ENCODE measurements at regions of chr1 and their contacts with region 1.

Region 1: GRCh38 chr1:77245830-77246229 is 26.6 kb upstream of the PIGK start:
- DNase-seq: no peak
- ATAC-seq: no peak
- H3K4me3 ChIP-seq: no peak overlapping the region
- H3K27ac ChIP-seq: no peak overlapping the region
- H3K4me1 ChIP-seq: no peaks in the 10 kb centered on the region
- H3K27me3 ChIP-seq: no peaks in the 10 kb centered on the region
- CTCF ChIP-seq: no peak

Region 2: DNA sequence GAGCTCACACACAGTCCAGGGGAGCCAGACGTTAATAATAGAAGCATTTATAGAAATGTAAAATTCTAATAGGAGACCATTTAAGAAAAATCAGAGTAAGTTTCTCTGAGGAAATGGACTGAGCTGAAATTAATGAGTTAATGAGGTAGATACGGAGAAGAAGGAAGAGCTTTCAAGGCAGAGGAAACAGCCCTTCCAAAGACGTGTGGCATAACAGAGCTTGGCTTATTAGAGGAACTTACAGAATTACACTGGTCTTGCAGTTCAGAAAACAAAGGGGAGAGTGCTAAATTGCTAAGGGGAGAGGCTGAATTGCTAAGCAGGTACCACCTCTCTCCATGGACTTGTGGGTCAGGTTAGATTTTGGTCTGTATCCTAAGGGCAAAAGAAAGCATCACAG is 18.4 kb before region 1 on chr1:
- CTCF ChIA-PET with region 1: no interaction called
- POLR2A ChIA-PET with region 1: no interaction called
- in situ Hi-C with region 1: no loop called
- intact Hi-C with region 1: loop called (anchors 1 kb)
- DNase-seq: no peak
- ATAC-seq: no peak
- H3K4me3 ChIP-seq: no peak overlapping the region
- H3K27ac ChIP-seq: no peak overlapping the region
- H3K4me1 ChIP-seq: no peaks in the 10 kb centered on the region
- H3K27me3 ChIP-seq: no peaks in the 10 kb centered on the region
- CTCF ChIP-seq: no peak

Region 3: GRCh38 chr1:77970192-77970591 is 724.4 kb after region 1 on chr1:
- CTCF ChIA-PET with region 1: no interaction called
- POLR2A ChIA-PET with region 1: no interaction called
- in situ Hi-C with region 1: no loop called
- intact Hi-C with region 1: no loop called
- DNase-seq: no peak
- ATAC-seq: no peak
- H3K4me3 ChIP-seq: no peak overlapping the region
- H3K27ac ChIP-seq: no peak overlapping the region
- H3K4me1 ChIP-seq: peaks cover 7% of the 10 kb centered on the region
- H3K27me3 ChIP-seq: no peaks in the 10 kb centered on the region
- CTCF ChIP-seq: no peak

Measured in Panc1 (cell line).